GM13977 (cell line): ENCODE measurements at regions of chr6 and their contacts with region 1.

Region 1: DNA sequence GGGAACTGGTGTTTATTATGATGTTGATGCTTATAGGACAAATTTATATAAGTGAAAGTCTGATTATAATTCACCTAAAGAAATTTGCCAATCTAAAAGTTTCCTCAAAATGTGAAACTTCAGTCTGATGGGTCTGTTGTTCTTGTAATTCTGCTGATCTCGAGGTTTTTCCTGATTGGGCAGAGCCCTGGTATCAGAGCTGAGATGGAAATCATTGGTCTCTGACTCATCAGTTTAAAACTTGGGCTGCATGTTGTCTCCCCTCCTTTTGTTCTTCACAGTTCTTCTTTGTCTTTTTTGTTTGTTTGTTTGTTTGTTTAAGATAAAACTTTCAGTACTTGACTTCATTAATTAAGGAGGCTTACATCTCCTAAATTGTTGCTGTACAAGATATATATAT is 5.9 kb downstream of the SMAP1 start:
- DNase-seq: no peak
- CTCF ChIP-seq: no peak

Region 2: DNA sequence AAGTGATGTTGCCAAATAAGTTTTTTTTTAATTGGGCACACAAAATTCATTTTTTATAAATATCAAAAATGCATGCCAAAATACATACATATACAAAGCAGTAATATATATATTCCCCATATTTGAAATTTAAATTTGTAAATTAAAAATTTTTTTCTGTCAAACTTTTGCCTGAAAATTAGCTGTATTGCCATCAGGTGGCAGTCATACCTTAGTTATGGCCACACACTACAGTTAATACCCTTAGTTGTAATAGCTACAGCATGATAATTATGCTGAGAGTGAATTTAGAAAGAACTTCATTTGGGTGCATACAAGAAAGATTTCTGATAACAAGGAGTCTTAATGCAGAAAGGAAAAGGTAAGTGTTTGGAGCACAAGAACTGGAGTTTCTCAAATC is 153.0 kb before region 1 on chr6:
- in situ Hi-C with region 1: loop called (anchors 10 kb)
- DNase-seq: peak; percentile 19
- CTCF ChIP-seq: peak; percentile 53